ENCODE measurements at regions of chr3 and their contacts with region 1.

Region 1: GRCh38 chr3:15332405-15333098 is at the start of gene SH3BP5:
- DNase-seq: peak; percentile 46 to 86 (median 75)
- ATAC-seq: peak; percentile 91
- H3K4me3 ChIP-seq: peak within 1 kb of the TSS; percentile 93 to 97
- H3K4me3 Mint-ChIP-seq: peak within 1 kb of the TSS; percentile 91
- H3K27ac ChIP-seq: peak within 1 kb of the TSS; percentile 60 to 67
- H3K27ac Mint-ChIP-seq: peak within 1 kb of the TSS; percentile 90
- H3K4me1 ChIP-seq: peaks cover 37% of the 10 kb centered on the region
- H3K4me1 Mint-ChIP-seq: peaks cover 50% of the 10 kb centered on the region
- H3K27me3 ChIP-seq: no peaks in the 10 kb centered on the region
- H3K27me3 Mint-ChIP-seq: no peaks in the 10 kb centered on the region
- CTCF ChIP-seq: peak; percentile 76
- total RNA-seq, gene SH3BP5: 4.4 to 5.9 TPM

Region 2: GRCh38 chr3:15032650-15033049 is 299.9 kb before region 1 on chr3:
- CTCF ChIA-PET with region 1: no interaction called
- POLR2A ChIA-PET with region 1: no interaction called
- intact Hi-C with region 1: no loop called
- DNase-seq: no peak
- ATAC-seq: no peak
- H3K4me3 ChIP-seq: no peak overlapping the region
- H3K4me3 Mint-ChIP-seq: no peak overlapping the region
- H3K27ac ChIP-seq: no peak overlapping the region
- H3K27ac Mint-ChIP-seq: peak overlapping the region; percentile 55
- H3K4me1 ChIP-seq: no peaks in the 10 kb centered on the region
- H3K4me1 Mint-ChIP-seq: no peaks in the 10 kb centered on the region
- H3K27me3 ChIP-seq: no peaks in the 10 kb centered on the region
- H3K27me3 Mint-ChIP-seq: no peaks in the 10 kb centered on the region
- CTCF ChIP-seq: no peak

Region 3: DNA sequence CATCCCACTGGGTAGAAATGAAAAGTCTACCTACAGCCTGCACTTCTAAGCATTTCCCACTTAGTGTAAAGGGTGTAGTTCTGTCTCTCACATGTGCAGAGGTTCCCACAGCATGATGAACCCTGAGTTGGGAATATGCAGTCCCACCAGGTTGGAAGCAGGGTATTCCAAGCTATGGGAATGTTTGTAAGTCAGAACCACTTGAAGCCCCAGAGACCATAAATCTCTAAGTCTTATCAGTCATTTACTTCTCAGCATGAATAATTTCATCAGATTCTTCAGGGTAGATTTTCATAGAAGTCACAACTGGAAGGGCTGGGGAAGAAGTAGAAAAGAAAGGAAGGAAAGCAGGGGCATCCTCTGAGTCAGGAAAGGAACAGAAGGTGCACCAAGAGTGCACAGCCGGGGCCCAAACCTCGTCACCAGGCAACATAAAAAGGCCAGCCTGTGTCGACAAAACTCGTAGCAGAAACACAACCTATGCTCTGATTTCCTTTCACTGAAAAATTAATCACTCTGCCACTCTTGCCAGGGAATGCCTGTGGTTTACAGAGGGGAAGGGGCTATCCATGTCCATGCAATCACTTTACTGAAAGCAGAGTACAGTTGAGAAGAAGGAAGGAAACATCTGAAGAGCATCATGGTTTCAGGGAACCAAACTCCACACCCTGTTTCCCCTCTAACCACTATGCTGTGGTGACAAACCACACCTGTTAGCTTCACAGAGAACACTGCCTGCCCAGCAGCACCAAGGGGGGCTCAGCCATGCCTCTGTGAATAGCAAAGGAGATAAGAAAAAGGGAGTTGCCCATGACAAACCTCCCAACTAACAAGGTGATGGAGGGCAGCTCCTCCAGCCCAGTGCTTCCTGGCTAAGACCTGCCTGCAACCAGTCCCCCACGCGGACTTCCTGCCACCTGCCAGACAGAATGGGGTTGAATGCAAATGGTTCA is 40.7 kb before region 1 on chr3:
- CTCF ChIA-PET with region 1: interaction called, 11 read pairs
- POLR2A ChIA-PET with region 1: interaction called, 3 read pairs
- intact Hi-C with region 1: loop called in 1 of 2 experiments (anchors 5 kb)
- DNase-seq: peak; percentile 39 to 93 (median 73)
- ATAC-seq: peak; percentile 93
- H3K4me3 ChIP-seq: peak overlapping the region; percentile 19 to 23
- H3K4me3 Mint-ChIP-seq: peak overlapping the region; percentile 70
- H3K27ac ChIP-seq: peak overlapping the region; percentile 14 to 71
- H3K27ac Mint-ChIP-seq: peak overlapping the region; percentile 92
- H3K4me1 ChIP-seq: peaks cover 54% of the 10 kb centered on the region
- H3K4me1 Mint-ChIP-seq: peaks cover 73% of the 10 kb centered on the region
- H3K27me3 ChIP-seq: no peaks in the 10 kb centered on the region
- H3K27me3 Mint-ChIP-seq: no peaks in the 10 kb centered on the region
- CTCF ChIP-seq: no peak

Region 4: GRCh38 chr3:15309662-15310335 is 22.8 kb before region 1 on chr3:
- CTCF ChIA-PET with region 1: interaction called, 6 read pairs
- POLR2A ChIA-PET with region 1: interaction called, 3 read pairs
- intact Hi-C with region 1: loop called in 1 of 2 experiments (anchors 2 kb)
- DNase-seq: peak in 1 of 9 experiments; percentile 17
- ATAC-seq: no peak
- H3K4me3 ChIP-seq: no peak overlapping the region
- H3K4me3 Mint-ChIP-seq: no peak overlapping the region
- H3K27ac ChIP-seq: peak overlapping the region in 1 of 2 experiments; percentile 37
- H3K27ac Mint-ChIP-seq: no peak overlapping the region
- H3K4me1 ChIP-seq: peaks cover 33% of the 10 kb centered on the region
- H3K4me1 Mint-ChIP-seq: peaks cover 55% of the 10 kb centered on the region
- H3K27me3 ChIP-seq: no peaks in the 10 kb centered on the region
- H3K27me3 Mint-ChIP-seq: no peaks in the 10 kb centered on the region
- CTCF ChIP-seq: no peak

Region 5: DNA sequence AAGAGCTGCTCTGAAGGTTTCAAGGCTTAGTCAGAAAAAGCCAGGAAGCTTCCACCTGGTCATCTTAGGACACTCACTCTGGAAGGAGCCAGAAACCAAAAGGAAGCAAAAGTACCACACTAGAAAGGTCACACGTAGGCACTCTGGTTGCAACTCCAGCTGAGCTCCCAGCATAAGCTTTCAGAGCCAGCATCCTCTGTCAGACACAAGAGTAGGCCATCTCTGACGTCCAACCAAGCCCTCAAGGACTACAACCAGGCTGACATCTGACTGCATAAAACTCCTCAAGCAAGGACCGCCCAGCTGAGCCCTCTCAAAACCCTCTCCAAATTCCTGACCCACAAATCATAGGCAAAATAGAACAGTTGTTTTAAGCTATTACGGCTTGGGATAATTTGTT is 13.0 kb before region 1 on chr3:
- CTCF ChIA-PET with region 1: interaction called, 15 read pairs
- POLR2A ChIA-PET with region 1: interaction called, 11 read pairs
- intact Hi-C with region 1: no loop called
- DNase-seq: no peak
- ATAC-seq: no peak
- H3K4me3 ChIP-seq: no peak overlapping the region
- H3K4me3 Mint-ChIP-seq: no peak overlapping the region
- H3K27ac ChIP-seq: no peak overlapping the region
- H3K27ac Mint-ChIP-seq: no peak overlapping the region
- H3K4me1 ChIP-seq: peaks cover 32% of the 10 kb centered on the region
- H3K4me1 Mint-ChIP-seq: peaks cover 55% of the 10 kb centered on the region
- H3K27me3 ChIP-seq: no peaks in the 10 kb centered on the region
- H3K27me3 Mint-ChIP-seq: no peaks in the 10 kb centered on the region
- CTCF ChIP-seq: no peak

Region 6: GRCh38 chr3:15377961-15378791 is 45.6 kb after region 1 on chr3:
- CTCF ChIA-PET with region 1: interaction called, 14 read pairs
- POLR2A ChIA-PET with region 1: interaction called, 4 read pairs
- intact Hi-C with region 1: loop called (anchors 1 kb)
- DNase-seq: peak; percentile 88 to 97 (median 93)
- ATAC-seq: peak; percentile 97
- H3K4me3 ChIP-seq: no peak overlapping the region
- H3K4me3 Mint-ChIP-seq: no peak overlapping the region
- H3K27ac ChIP-seq: peak overlapping the region; percentile 55 to 90
- H3K27ac Mint-ChIP-seq: peak overlapping the region; percentile 89
- H3K4me1 ChIP-seq: peaks cover 5% of the 10 kb centered on the region
- H3K4me1 Mint-ChIP-seq: peaks cover 8% of the 10 kb centered on the region
- H3K27me3 ChIP-seq: no peaks in the 10 kb centered on the region
- H3K27me3 Mint-ChIP-seq: no peaks in the 10 kb centered on the region
- CTCF ChIP-seq: peak; percentile 85

Region 7: GRCh38 chr3:15601397-15602145 is 269.0 kb after region 1 on chr3 and contains the starts of genes BTD and HACL1:
- CTCF ChIA-PET with region 1: no interaction called
- POLR2A ChIA-PET with region 1: no interaction called
- intact Hi-C with region 1: loop called in 1 of 2 experiments (anchors 2 kb)
- DNase-seq: peak; percentile 96 to 100 (median 99)
- ATAC-seq: peak; percentile 89
- H3K4me3 ChIP-seq: peak within 1 kb of the TSS; percentile 82 to 94
- H3K4me3 Mint-ChIP-seq: peak within 1 kb of the TSS; percentile 100
- H3K27ac ChIP-seq: peak within 1 kb of the TSS; percentile 82 to 88
- H3K27ac Mint-ChIP-seq: peak within 1 kb of the TSS; percentile 99
- H3K4me1 ChIP-seq: peaks cover 19% of the 10 kb centered on the region
- H3K4me1 Mint-ChIP-seq: peaks cover 54% of the 10 kb centered on the region
- H3K27me3 ChIP-seq: no peaks in the 10 kb centered on the region
- H3K27me3 Mint-ChIP-seq: no peaks in the 10 kb centered on the region
- CTCF ChIP-seq: peak; percentile 24
- total RNA-seq, gene BTD: 9.1 to 11.3 TPM
- total RNA-seq, gene HACL1: 30.1 to 33.4 TPM

Measured in CD8-positive, alpha-beta T cell (primary cell).